ENCODE measurements at regions of chr16 and their contacts with region 1.

Region 1: GRCh38 chr16:19717771-19718602 is at the starts of genes IQCK and KNOP1:
- DNase-seq: peak; percentile 77 to 93 (median 88)
- H3K4me3 ChIP-seq: peak within 1 kb of the TSS; percentile 64 to 100 (median 95)
- H3K27ac ChIP-seq: peak within 1 kb of the TSS in 56 of 59 donors; percentile 7 to 87 (median 72)
- H3K27me3 ChIP-seq: no peaks in the 10 kb centered on the region
- CTCF ChIP-seq: peak in 19 of 56 donors; percentile 6 to 41 (median 23)
- total RNA-seq, gene IQCK: 13.2 to 40.2 (median 23.3) TPM
- total RNA-seq, gene KNOP1: 13.0 to 94.8 (median 30.2) TPM

Region 2: DNA sequence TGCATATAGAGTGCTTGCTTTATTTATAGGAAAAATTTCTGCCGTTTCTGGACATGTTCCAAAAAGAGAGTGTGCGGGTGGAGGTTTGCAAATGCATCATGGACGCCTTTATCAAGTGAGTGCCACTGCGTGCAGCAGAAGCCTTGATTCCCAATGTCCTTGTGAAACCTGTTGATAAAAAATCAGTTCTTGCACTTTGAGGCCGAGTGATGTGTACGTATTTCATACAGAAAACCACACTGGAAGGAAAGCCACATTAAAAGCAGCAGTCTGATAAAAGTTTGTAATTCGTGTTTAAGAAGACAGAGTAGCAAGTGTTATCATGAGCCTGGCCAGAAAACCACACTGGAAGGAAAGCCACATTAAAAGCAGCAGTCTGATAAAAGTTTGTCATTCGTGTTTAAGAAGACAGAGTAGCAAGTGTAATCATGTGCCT is 78.0 kb before region 1 on chr16:
- intact Hi-C with region 1: no loop called
- DNase-seq: no peak
- H3K4me3 ChIP-seq: no peak overlapping the region
- H3K27ac ChIP-seq: peak overlapping the region in 31 of 59 donors; percentile 3 to 65 (median 28)
- H3K27me3 ChIP-seq: no peaks in the 10 kb centered on the region
- CTCF ChIP-seq: no peak

Region 3: DNA sequence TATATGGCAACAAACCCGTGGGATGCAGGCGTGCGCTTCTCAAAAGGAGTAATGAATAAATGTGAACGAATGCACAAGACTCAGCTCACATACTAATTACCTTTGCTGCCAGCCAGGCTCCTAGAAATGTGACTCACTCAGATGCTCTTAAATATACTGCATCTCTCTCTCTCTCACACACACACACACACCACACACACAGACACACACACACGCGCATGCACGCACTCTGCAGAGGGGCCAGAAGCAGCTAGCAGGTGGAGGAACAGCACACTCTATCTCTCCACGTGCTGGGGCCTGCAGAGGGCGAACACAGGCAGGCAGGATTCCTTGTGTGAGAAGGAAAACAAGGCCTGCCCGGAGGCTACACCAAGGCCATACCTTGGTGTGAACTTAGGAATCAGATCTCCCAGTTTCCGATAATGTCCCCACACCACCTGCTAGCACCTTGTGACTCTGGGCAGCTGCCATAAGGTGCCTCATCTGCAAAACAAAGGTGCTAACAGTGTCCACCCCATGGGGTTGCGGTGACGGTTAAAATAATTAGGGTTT is 161.3 kb after region 1 on chr16:
- intact Hi-C with region 1: loop called (anchors 2 to 5 kb)
- DNase-seq: peak in 6 of 10 donors; percentile 49 to 83 (median 72)
- H3K4me3 ChIP-seq: peak overlapping the region in 54 of 59 donors; percentile 1 to 95 (median 45)
- H3K27ac ChIP-seq: peak overlapping the region; percentile 46 to 99 (median 97)
- H3K27me3 ChIP-seq: no peaks in the 10 kb centered on the region
- CTCF ChIP-seq: peak in 1 of 56 donors; percentile 4

Measured in dorsolateral prefrontal cortex (tissue), 120 donors.